ENCODE measurements at regions of chr11 and their contacts with region 1.

Region 1: GRCh38 chr11:64117763-64118459 is 48.0 kb downstream of the MACROD1 start:
- DNase-seq: no peak

Region 2: GRCh38 chr11:64021757-64022093 is 96.2 kb before region 1 on chr11:
- in situ Hi-C with region 1: loop called (anchors 5 kb)
- DNase-seq: peak; percentile 63

Region 3: GRCh38 chr11:64040684-64041322 is 77.1 kb before region 1 on chr11:
- in situ Hi-C with region 1: no loop called
- DNase-seq: peak; percentile 62

Region 4: DNA sequence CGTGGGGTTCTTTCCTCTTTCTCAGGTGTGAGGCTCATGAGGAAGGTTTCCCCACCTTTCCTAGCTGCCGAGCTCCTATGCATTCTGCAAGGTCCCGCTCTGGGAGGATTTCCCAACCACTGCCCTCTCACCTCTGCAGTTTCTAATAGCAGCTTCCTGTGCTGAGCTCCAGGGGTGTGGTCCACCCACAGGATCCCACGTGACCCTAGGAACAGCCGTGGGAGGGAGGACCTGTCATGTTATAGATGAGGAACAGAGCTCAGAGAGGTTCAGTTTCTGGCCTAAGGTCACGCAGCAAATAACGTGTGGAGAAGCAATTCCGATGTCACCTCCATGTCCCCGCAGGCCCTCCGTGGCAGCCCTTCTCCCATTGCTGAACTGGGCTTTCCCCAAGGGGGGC is 43.7 kb before region 1 on chr11:
- in situ Hi-C with region 1: no loop called
- DNase-seq: no peak

Region 5: DNA sequence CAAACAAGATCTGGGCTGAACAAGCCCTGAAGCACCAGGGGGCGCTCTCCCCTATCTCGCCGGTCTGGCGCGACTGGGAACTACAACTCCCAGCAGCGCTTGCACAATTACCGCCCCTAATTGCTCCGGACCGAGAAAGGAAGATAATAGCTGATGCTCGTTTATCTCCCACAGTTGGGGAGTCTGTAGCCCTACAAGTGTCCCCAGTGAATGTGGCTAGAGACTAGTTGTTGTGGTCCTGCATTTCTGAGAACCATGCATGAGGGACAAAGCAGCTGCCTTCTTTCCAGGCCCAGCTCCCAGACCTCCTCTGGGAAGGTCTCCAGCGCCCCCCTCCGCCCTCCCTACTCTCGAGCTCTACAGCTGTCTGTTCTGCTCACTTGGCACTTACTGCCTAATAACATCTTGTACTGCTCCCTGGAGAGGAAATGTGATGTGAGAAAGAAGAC is 570.6 kb after region 1 on chr11:
- in situ Hi-C with region 1: no loop called
- DNase-seq: peak; percentile 90

Measured in G401 (cell line).